K562 (cell line): ENCODE measurements at regions of chr10 and their contacts with region 1.

Region 1: DNA sequence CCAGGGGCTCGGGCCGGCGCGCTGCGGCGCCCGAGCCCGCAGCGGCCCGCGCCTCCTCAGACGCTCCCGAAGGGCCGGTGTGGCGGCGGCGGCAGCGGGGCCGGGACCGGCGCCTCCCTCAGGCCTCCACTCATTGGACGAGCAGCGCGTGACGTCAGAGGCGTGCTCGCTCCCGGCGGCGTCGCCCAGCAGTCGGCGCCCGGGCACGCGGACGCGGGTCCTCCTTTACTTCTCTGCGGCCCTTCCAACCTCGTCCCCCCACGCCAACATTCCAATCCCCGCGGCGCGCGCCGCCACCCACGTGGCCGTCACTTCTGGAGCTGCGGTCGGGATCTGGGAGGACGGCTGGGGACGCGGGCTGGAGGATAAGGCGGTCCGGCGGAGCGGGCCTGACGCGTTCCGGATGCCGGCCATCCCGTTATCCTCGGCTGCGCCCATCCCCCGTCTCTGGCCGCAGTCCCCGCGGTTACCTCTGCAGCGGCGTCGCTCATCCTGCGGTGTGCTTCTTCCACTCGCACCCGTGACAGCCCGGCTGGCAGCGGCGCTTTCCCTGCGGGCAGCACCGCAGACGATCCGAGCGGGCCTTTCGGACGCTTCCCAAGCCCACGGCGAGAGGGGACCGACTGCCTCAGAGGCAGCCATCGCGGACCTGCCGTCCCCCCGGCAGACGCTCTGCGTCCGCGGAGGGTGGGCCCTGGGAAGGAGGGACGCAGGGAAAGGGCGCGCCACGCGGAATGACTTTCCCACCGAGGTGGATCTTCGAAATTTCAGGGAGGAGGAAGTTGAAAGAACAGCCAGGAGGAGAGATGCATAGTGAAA is at the start of gene PDZD8:
- DNase-seq: peak; percentile 88 to 92 (median 88)
- ATAC-seq: peak; percentile 77
- H3K4me3 ChIP-seq: peak within 1 kb of the TSS; percentile 92
- H3K27ac ChIP-seq: peak within 1 kb of the TSS; percentile 83
- H3K4me1 ChIP-seq: peaks cover 13 to 30% of the 10 kb centered on the region in 2 experiments; a peak in 4 of 5 replicates
- H3K27me3 ChIP-seq: no peaks in the 10 kb centered on the region
- CTCF ChIP-seq: no peak
- EP300 ChIP-seq: no peak
- POLR2A ChIP-seq: peak; percentile 71
- RAD21 ChIP-seq: no peak
- polyA plus RNA-seq, gene PDZD8: 5.5 to 5.9 TPM

Region 2: DNA sequence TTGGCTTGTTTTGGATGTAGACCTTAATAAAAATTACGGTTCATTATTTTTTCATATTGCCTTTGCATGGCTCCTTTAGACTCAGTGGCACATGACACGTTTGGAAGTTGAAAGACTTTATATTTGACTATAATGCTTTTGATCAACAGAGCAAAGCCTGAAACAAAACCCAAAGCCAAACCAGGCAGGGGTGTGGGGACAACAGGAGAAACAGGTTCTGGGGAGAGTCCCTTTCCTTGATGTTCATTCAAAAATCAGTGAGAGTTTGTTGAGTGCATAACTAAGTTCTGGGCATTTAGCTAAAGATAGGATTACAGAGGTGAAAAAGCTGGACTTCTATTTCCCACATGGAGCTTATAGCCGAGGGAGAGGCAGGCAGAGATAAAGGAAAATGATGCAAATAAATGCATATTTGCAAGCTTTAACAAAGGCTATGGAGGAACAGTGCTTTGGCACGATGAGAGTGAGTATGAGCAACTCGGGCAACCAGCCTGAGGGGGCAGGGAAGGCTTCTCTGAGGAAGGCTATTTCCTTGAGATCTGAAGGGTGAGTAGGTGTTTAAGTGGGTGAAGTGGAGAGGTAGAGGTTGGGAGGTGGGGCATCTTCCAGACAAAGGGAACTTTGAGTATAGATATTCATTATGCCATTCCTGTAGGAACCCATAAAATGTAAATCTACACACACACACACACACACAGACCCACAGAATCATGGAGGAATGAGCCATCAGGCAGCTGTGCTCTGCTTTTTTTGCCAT is 34.2 kb after region 1 on chr10:
- CTCF ChIA-PET with region 1: no interaction called
- POLR2A ChIA-PET with region 1: interaction called, 3 read pairs
- in situ Hi-C with region 1: no loop called
- intact Hi-C with region 1: loop called (anchors 2 kb)
- DNase-seq: no peak
- ATAC-seq: no peak
- H3K4me3 ChIP-seq: no peak overlapping the region
- H3K27ac ChIP-seq: peak overlapping the region; percentile 89
- H3K4me1 ChIP-seq: peaks cover 30 to 78% of the 10 kb centered on the region in 2 experiments
- H3K27me3 ChIP-seq: no peaks in the 10 kb centered on the region
- CTCF ChIP-seq: no peak
- EP300 ChIP-seq: no peak
- POLR2A ChIP-seq: no peak
- RAD21 ChIP-seq: no peak

Region 3: GRCh38 chr10:117425974-117426566 is 50.5 kb after region 1 on chr10:
- CTCF ChIA-PET with region 1: no interaction called
- POLR2A ChIA-PET with region 1: no interaction called
- in situ Hi-C with region 1: no loop called
- intact Hi-C with region 1: loop called (anchors 5 kb)
- DNase-seq: no peak
- ATAC-seq: no peak
- H3K4me3 ChIP-seq: no peak overlapping the region
- H3K27ac ChIP-seq: no peak overlapping the region
- H3K4me1 ChIP-seq: peaks cover 4 to 6% of the 10 kb centered on the region in 2 experiments; a peak in 3 of 5 replicates
- H3K27me3 ChIP-seq: no peaks in the 10 kb centered on the region
- CTCF ChIP-seq: no peak
- EP300 ChIP-seq: no peak
- POLR2A ChIP-seq: no peak
- RAD21 ChIP-seq: no peak

Region 4: GRCh38 chr10:117796130-117796745 is 420.7 kb after region 1 on chr10:
- CTCF ChIA-PET with region 1: no interaction called
- POLR2A ChIA-PET with region 1: no interaction called
- in situ Hi-C with region 1: no loop called
- intact Hi-C with region 1: no loop called
- DNase-seq: no peak
- ATAC-seq: no peak
- H3K4me3 ChIP-seq: no peak overlapping the region
- H3K27ac ChIP-seq: no peak overlapping the region
- H3K4me1 ChIP-seq: no peaks in the 10 kb centered on the region
- H3K27me3 ChIP-seq: peaks cover 0 to 17% of the 10 kb centered on the region in 2 experiments; a peak in 2 of 5 replicates
- CTCF ChIP-seq: no peak
- EP300 ChIP-seq: no peak
- POLR2A ChIP-seq: no peak
- RAD21 ChIP-seq: no peak